Activated B cell treated with CpG ODN at 0.5 μM for 24 hours (primary cell): ENCODE measurements at regions of chr16 and their contacts with region 1.

Region 1: DNA sequence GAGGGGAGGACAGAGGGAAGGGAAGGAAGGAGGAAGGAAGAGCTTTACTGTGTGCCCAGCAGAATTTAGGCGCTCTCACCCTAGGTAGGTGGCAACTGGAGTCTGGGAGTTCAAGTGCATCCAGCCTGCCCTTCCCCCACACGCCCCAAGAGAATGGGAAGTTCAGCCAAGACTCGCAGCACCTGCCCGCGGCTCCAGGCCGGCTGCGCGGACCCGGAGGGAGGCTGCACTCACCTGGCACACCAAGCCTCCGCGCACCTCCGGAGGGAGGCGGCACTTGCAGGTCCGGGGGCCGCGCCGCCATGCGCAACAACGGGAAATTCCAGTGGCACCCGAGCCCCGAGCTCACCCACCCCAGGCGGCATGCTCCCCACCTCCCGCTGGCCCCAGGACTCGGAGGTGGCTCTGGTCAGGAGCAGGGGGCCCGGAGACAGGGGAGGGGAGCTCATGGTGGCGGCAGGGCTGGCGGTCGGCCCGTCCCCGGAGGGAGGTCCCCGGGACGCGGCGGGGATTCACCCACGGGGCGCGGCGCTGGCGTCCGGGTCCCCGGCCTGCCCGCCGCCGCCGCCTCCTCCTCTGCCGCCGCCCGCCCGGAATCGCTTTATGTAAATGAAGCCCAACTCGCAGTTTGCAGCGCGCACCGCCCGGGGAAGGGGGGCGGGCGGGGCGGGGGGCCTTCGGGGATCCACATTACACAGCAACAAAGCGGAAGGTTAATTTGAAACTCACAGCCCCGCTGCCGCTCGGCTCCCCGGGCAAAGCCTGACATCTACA is at the start of gene ZFHX3:
- DNase-seq: peak; percentile 70
- ATAC-seq: peak; percentile 87
- H3K4me3 Mint-ChIP-seq: peak within 1 kb of the TSS; percentile 82
- H3K27ac Mint-ChIP-seq: peak within 1 kb of the TSS; percentile 50
- H3K4me1 Mint-ChIP-seq: peaks cover 17% of the 10 kb centered on the region
- H3K27me3 Mint-ChIP-seq: peaks cover 3% of the 10 kb centered on the region
- CTCF ChIP-seq: no peak
- total RNA-seq, gene ZFHX3: 9.2 and 9.6 TPM in 2 replicates

Region 2: DNA sequence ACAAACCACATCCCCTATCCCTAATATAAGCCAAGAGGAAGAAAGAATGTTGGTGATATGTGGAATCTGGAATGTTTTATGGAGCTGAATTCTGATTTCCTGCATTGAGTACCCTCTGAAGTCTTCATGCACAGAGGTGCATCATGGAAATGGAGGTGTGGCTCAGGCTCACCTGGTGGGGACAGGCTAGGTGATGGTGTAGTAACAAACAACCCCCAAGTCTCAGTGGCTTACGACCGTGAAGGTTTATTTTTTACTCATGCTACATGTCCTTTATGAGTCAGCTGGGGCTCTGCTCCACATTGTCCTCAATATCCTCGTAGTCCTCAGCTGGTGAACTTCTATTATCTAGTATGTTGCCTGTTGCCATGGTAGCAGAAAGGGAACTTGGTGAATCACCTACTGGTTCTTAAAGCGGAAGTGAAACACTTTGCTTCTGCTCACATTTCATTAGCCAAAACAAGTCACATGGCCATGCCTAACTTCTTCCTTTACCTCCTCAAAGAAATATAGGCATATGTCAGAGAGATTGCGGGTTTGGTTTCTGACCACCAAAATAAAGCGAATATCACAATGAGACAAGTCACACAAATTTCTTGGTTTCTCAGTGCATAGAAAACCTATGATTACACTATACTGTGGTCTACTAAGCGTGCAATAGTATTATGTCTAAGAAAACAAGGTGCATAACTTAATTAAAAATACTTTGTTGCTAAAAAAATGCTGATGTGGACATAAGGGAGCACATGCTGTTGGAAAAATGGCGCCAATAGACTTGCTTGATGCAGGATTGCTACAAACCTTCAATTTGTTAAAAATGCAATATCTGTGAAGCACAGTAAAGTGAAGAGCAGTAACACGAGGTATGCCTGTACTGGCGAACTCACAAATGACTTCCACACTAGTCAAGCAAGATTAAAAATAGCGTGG is 875.3 kb before region 1 on chr16 and contains the start of gene PMFBP1:
- CTCF ChIA-PET with region 1: no interaction called
- POLR2A ChIA-PET with region 1: no interaction called
- intact Hi-C with region 1: loop called (anchors 5 kb)
- DNase-seq: peak; percentile 17
- ATAC-seq: peak; percentile 95
- H3K4me3 Mint-ChIP-seq: peak within 1 kb of the TSS; percentile 6
- H3K27ac Mint-ChIP-seq: peak within 1 kb of the TSS; percentile 85
- H3K4me1 Mint-ChIP-seq: peaks cover 12% of the 10 kb centered on the region
- H3K27me3 Mint-ChIP-seq: no peaks in the 10 kb centered on the region
- CTCF ChIP-seq: no peak
- total RNA-seq, gene PMFBP1: 5.7 and 5.9 TPM in 2 replicates

Region 3: GRCh38 chr16:72501739-72502593 is 545.7 kb before region 1 on chr16:
- CTCF ChIA-PET with region 1: no interaction called
- POLR2A ChIA-PET with region 1: no interaction called
- intact Hi-C with region 1: loop called (anchors 1 kb)
- DNase-seq: peak; percentile 29
- ATAC-seq: peak; percentile 58
- H3K4me3 Mint-ChIP-seq: no peak overlapping the region
- H3K27ac Mint-ChIP-seq: no peak overlapping the region
- H3K4me1 Mint-ChIP-seq: peaks cover 3% of the 10 kb centered on the region
- H3K27me3 Mint-ChIP-seq: no peaks in the 10 kb centered on the region
- CTCF ChIP-seq: peak; percentile 26

Region 4: GRCh38 chr16:73015612-73016487 is 31.9 kb before region 1 on chr16:
- CTCF ChIA-PET with region 1: no interaction called
- POLR2A ChIA-PET with region 1: no interaction called
- intact Hi-C with region 1: loop called (anchors 1 kb)
- DNase-seq: no peak
- ATAC-seq: peak; percentile 66
- H3K4me3 Mint-ChIP-seq: no peak overlapping the region
- H3K27ac Mint-ChIP-seq: peak overlapping the region; percentile 0
- H3K4me1 Mint-ChIP-seq: peaks cover 18% of the 10 kb centered on the region
- H3K27me3 Mint-ChIP-seq: no peaks in the 10 kb centered on the region
- CTCF ChIP-seq: no peak

Region 5: DNA sequence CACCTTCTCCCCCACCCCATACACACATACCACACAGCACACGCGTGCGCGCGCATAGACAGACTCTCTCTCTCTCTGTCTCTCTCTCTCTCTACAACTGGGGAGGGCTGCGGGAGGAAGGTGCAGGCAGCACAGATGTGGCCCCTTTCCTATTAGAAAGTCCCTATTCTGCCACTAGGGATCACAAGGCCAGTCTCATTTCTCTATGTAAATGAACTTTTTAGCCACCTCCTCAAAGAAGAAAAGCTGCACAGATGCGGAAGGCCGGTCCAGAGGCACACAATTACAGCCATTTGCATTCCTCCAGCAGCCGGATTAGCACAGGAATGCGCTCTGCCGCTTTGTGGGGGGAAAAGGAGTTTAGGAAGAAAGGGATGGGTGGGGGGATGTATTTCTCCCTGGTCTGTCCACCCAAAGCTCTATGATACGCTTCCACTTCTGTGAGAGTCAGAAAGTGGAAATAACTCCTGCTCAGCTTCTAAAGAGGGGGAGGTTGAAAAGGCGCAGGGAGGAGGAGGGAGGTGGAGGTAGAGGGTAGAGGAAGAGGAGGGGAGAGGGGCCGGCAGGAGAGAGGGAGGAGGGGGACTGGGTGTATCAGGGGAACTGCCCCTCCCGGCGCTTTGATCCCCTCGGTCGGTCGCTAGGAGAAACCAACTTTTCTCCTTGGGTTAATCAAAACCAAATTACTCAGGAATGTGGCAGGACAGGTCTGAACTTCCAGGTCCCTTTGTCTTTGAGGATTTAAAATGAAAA is 11.5 kb before region 1 on chr16:
- CTCF ChIA-PET with region 1: no interaction called
- POLR2A ChIA-PET with region 1: interaction called, 5 read pairs
- intact Hi-C with region 1: loop called (anchors 1 kb)
- DNase-seq: no peak
- ATAC-seq: peak; percentile 87
- H3K4me3 Mint-ChIP-seq: peak overlapping the region; percentile 75
- H3K27ac Mint-ChIP-seq: peak overlapping the region; percentile 78
- H3K4me1 Mint-ChIP-seq: peaks cover 46% of the 10 kb centered on the region
- H3K27me3 Mint-ChIP-seq: peaks cover 24% of the 10 kb centered on the region
- CTCF ChIP-seq: no peak

Region 6: GRCh38 chr16:73058221-73058615 is 10.5 kb after region 1 on chr16:
- CTCF ChIA-PET with region 1: no interaction called
- POLR2A ChIA-PET with region 1: interaction called, 3 read pairs
- intact Hi-C with region 1: loop called (anchors 1 kb)
- DNase-seq: peak; percentile 55
- ATAC-seq: peak; percentile 70
- H3K4me3 Mint-ChIP-seq: peak overlapping the region; percentile 88
- H3K27ac Mint-ChIP-seq: no peak overlapping the region
- H3K4me1 Mint-ChIP-seq: peaks cover 22% of the 10 kb centered on the region
- H3K27me3 Mint-ChIP-seq: peaks cover 33% of the 10 kb centered on the region
- CTCF ChIP-seq: no peak

Region 7: GRCh38 chr16:73122604-73123391 is 75.1 kb after region 1 on chr16:
- CTCF ChIA-PET with region 1: no interaction called
- POLR2A ChIA-PET with region 1: no interaction called
- intact Hi-C with region 1: no loop called
- DNase-seq: no peak
- ATAC-seq: no peak
- H3K4me3 Mint-ChIP-seq: no peak overlapping the region
- H3K27ac Mint-ChIP-seq: no peak overlapping the region
- H3K4me1 Mint-ChIP-seq: no peaks in the 10 kb centered on the region
- H3K27me3 Mint-ChIP-seq: peaks cover 10% of the 10 kb centered on the region
- CTCF ChIP-seq: no peak

Region 8: DNA sequence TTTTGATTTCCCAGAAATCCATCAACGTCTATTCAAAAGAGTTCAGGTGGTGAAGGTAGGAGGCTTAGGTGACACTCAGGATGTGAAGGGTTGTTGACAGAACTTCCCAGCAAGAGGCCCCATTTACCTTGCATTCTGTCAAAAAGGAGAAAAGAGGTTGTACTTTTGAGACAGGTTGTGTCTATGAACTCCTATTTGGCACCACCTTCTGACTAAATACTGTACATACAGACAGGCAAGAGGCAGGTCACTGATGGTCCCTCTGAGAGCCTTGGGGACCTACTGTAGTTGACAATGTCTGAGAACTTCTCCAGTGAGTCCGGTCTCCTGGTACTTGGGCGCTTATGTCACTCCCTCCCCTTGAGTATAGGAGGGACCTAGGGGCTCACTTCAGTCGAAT is 479.5 kb after region 1 on chr16:
- CTCF ChIA-PET with region 1: no interaction called
- POLR2A ChIA-PET with region 1: no interaction called
- intact Hi-C with region 1: no loop called
- DNase-seq: no peak
- ATAC-seq: no peak
- H3K4me3 Mint-ChIP-seq: no peak overlapping the region
- H3K27ac Mint-ChIP-seq: no peak overlapping the region
- H3K4me1 Mint-ChIP-seq: no peaks in the 10 kb centered on the region
- H3K27me3 Mint-ChIP-seq: no peaks in the 10 kb centered on the region
- CTCF ChIP-seq: no peak